ENCODE measurements at regions of chr6 and their contacts with region 1.

Region 1: GRCh38 chr6:34791701-34792235 is at the start of gene BLTP3A:
- H3K4me3 Mint-ChIP-seq: peak within 1 kb of the TSS; percentile 91
- H3K27ac Mint-ChIP-seq: peak within 1 kb of the TSS; percentile 98
- H3K4me1 Mint-ChIP-seq: peaks cover 32% of the 10 kb centered on the region
- H3K27me3 Mint-ChIP-seq: no peaks in the 10 kb centered on the region

Region 2: GRCh38 chr6:34696739-34697543 is 94.8 kb before region 1 on chr6 and contains the start of gene ILRUN:
- intact Hi-C with region 1: loop called (anchors 10 kb)
- H3K4me3 Mint-ChIP-seq: peak within 1 kb of the TSS; percentile 89
- H3K27ac Mint-ChIP-seq: peak within 1 kb of the TSS; percentile 92
- H3K4me1 Mint-ChIP-seq: peaks cover 32% of the 10 kb centered on the region
- H3K27me3 Mint-ChIP-seq: no peaks in the 10 kb centered on the region

Region 3: GRCh38 chr6:34771727-34772126 is 20.0 kb before region 1 on chr6:
- intact Hi-C with region 1: loop called (anchors 1 kb)
- H3K4me3 Mint-ChIP-seq: no peak overlapping the region
- H3K27ac Mint-ChIP-seq: peak overlapping the region; percentile 59
- H3K4me1 Mint-ChIP-seq: peaks cover 34% of the 10 kb centered on the region
- H3K27me3 Mint-ChIP-seq: no peaks in the 10 kb centered on the region

Region 4: GRCh38 chr6:34819571-34820480 is 28.1 kb after region 1 on chr6:
- intact Hi-C with region 1: loop called (anchors 2 kb)
- H3K4me3 Mint-ChIP-seq: peak overlapping the region; percentile 11
- H3K27ac Mint-ChIP-seq: peak overlapping the region; percentile 91
- H3K4me1 Mint-ChIP-seq: peaks cover 33% of the 10 kb centered on the region
- H3K27me3 Mint-ChIP-seq: no peaks in the 10 kb centered on the region

Region 5: GRCh38 chr6:34887753-34888513 is 96.2 kb after region 1 on chr6 and contains the start of gene TAF11:
- intact Hi-C with region 1: loop called (anchors 10 kb)
- H3K4me3 Mint-ChIP-seq: peak within 1 kb of the TSS; percentile 100
- H3K27ac Mint-ChIP-seq: peak within 1 kb of the TSS; percentile 100
- H3K4me1 Mint-ChIP-seq: peaks cover 59% of the 10 kb centered on the region
- H3K27me3 Mint-ChIP-seq: no peaks in the 10 kb centered on the region

Region 6: DNA sequence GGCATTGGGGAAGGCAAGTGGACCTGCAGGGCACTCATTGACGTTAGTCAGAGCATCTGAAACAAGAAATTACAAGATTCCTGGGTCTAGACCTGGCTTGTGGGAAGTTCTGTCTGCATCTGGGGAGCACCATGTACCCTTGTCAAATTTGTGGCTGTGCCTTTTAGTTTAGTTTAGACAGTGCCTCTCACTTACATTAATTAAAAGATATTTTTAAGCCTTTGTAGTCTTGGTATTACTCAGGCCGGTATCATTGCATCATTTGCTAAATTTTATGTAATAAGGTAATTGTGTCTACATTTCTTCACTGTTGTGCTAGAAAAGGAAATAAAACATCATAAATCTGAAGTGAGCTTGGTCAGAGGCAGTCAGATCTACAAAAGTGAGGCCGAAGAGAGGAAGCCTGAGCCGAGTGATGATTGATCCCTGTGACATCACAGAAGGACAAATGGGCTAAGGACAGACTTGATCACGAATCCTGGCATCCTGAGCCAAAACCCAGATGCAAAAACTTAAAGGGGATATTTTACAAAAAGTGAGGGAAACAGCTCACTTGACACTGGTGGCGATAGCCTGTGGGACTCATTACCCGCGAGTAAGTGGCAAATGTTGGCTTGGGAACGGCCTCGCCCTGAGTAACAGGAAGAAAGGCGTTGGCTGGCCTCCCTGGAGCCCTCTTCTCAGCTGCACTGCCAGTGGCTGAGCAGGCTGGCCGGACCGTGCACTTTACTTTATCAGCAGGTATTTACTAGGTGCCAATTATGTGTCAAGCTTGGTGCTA is 242.8 kb after region 1 on chr6:
- intact Hi-C with region 1: no loop called
- H3K4me3 Mint-ChIP-seq: peak overlapping the region; percentile 20
- H3K27ac Mint-ChIP-seq: peak overlapping the region; percentile 84
- H3K4me1 Mint-ChIP-seq: peaks cover 27% of the 10 kb centered on the region
- H3K27me3 Mint-ChIP-seq: no peaks in the 10 kb centered on the region